PC-3 (cell line): ENCODE measurements at regions of chr1 and their contacts with region 1.

Region 1: GRCh38 chr1:16146279-16147155 is 9.4 kb downstream of the EPHA2 start:
- DNase-seq: peak; percentile 89
- ATAC-seq: peak; percentile 11
- H3K4me3 ChIP-seq: peak overlapping the region; percentile 83
- H3K27ac ChIP-seq: peak overlapping the region; percentile 97
- H3K4me1 ChIP-seq: peaks cover 100% of the 10 kb centered on the region
- H3K27me3 ChIP-seq: no peaks in the 10 kb centered on the region
- CTCF ChIP-seq: no peak

Region 2: GRCh38 chr1:16032388-16033103 is 114.0 kb before region 1 on chr1:
- CTCF ChIA-PET with region 1: no interaction called
- POLR2A ChIA-PET with region 1: no interaction called
- intact Hi-C with region 1: no loop called
- DNase-seq: peak; percentile 85
- ATAC-seq: peak; percentile 94
- H3K4me3 ChIP-seq: no peak overlapping the region
- H3K27ac ChIP-seq: no peak overlapping the region
- H3K4me1 ChIP-seq: no peaks in the 10 kb centered on the region
- H3K27me3 ChIP-seq: no peaks in the 10 kb centered on the region
- CTCF ChIP-seq: peak; percentile 77

Region 3: DNA sequence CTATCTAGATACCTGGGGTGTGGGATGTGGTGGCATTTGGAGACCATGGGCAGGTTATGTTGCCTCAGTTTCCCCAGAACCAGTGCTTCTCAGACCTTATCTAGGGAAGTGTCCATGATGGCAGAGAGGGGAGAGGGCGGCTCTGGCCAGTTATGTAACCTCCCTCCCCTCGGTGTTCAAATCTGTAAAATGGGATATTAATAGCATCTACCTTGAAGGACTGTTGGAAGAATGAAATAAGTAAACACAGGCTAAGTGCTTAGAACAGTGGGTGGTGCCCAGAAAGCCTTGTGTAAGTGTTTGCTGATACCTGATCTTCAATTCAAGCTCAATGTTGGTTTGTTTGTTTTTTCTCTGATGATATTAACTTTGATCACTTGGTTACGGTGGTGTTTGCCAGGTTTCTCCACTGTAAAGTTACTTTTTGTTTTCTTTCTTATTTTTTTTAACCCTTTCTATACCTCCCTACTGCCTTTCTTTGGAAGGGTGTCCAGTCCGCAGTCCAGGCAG is 25.6 kb before region 1 on chr1:
- CTCF ChIA-PET with region 1: no interaction called
- POLR2A ChIA-PET with region 1: interaction called, 15 read pairs
- intact Hi-C with region 1: no loop called
- DNase-seq: peak; percentile 81
- ATAC-seq: peak; percentile 44
- H3K4me3 ChIP-seq: no peak overlapping the region
- H3K27ac ChIP-seq: peak overlapping the region; percentile 58
- H3K4me1 ChIP-seq: peaks cover 42% of the 10 kb centered on the region
- H3K27me3 ChIP-seq: no peaks in the 10 kb centered on the region
- CTCF ChIP-seq: no peak

Region 4: GRCh38 chr1:16135501-16135900 is 11.0 kb before region 1 on chr1:
- CTCF ChIA-PET with region 1: no interaction called
- POLR2A ChIA-PET with region 1: no interaction called
- intact Hi-C with region 1: no loop called
- DNase-seq: no peak
- ATAC-seq: no peak
- H3K4me3 ChIP-seq: no peak overlapping the region
- H3K27ac ChIP-seq: no peak overlapping the region
- H3K4me1 ChIP-seq: peaks cover 30% of the 10 kb centered on the region
- H3K27me3 ChIP-seq: no peaks in the 10 kb centered on the region
- CTCF ChIP-seq: no peak

Region 5: DNA sequence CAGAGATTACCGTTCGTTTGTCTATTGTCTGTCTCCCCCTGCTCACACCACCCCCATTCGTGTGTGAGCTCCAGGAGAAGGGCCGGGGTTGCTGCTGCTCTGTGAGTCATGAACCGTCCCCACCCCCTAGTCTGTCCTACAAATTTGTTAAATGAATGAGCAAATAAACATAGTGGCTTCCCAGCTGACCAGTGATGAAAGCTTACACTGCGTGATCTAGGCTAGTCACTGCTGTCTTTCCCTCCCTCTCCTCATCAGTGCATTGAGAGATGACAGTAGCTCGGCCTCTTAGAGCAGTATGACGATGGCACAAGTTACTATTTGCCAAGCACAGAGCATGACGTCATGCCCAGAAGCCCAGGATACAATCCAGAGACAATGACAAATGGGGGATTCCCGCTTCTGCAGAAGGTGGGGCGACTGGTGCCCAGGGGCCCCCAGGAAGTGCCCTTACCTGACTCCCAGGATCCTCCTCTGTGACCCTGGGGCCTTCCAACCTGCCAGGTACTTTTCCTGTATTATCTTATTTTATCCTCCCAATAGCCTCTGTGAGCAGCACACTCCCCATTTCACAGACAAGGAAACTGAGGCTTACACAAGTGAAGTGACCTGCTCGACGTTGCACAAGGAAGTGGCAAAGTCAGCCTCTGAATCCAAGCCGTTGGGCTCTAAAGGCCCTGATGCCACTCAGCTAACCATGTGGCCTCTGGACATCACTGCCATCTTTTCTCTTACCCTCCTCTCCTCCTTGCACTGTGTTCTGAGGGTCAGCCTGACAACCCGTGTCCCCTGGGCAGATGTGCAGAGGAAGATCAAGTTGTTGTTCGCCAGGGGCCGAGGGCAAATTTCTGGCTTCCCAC is 17.9 kb after region 1 on chr1:
- CTCF ChIA-PET with region 1: no interaction called
- POLR2A ChIA-PET with region 1: no interaction called
- intact Hi-C with region 1: no loop called
- DNase-seq: peak; percentile 94
- ATAC-seq: peak; percentile 76
- H3K4me3 ChIP-seq: no peak overlapping the region
- H3K27ac ChIP-seq: peak overlapping the region; percentile 53
- H3K4me1 ChIP-seq: peaks cover 44% of the 10 kb centered on the region
- H3K27me3 ChIP-seq: no peaks in the 10 kb centered on the region
- CTCF ChIP-seq: no peak